ENCODE measurements at regions of chr7 and their contacts with region 1.

Region 1: GRCh38 chr7:134432296-134433152 is 26.4 kb downstream of the AKR1B1 start:
- DNase-seq: peak; percentile 86 to 88
- H3K4me3 ChIP-seq: peak overlapping the region; percentile 34 to 50
- H3K27ac ChIP-seq: peak overlapping the region; percentile 62 to 67
- H3K4me1 ChIP-seq: peaks cover 0 to 13% (median 2%) of the 10 kb centered on the region in 4 donors
- H3K27me3 ChIP-seq: no peaks in the 10 kb centered on the region
- CTCF ChIP-seq: peak; percentile 68 to 93

Region 2: GRCh38 chr7:134502463-134503371 is 70.2 kb after region 1 on chr7:
- intact Hi-C with region 1: no loop called
- DNase-seq: peak; percentile 74 to 84
- H3K4me3 ChIP-seq: no peak overlapping the region
- H3K27ac ChIP-seq: no peak overlapping the region
- H3K4me1 ChIP-seq: peaks cover 0 to 4% (median 0%) of the 10 kb centered on the region in 4 donors
- H3K27me3 ChIP-seq: no peaks in the 10 kb centered on the region
- CTCF ChIP-seq: no peak

Region 3: GRCh38 chr7:134527979-134528371 is 95.5 kb after region 1 on chr7:
- intact Hi-C with region 1: no loop called
- DNase-seq: peak; percentile 67 to 74
- H3K4me3 ChIP-seq: no peak overlapping the region
- H3K27ac ChIP-seq: no peak overlapping the region
- H3K4me1 ChIP-seq: peaks cover 0 to 9% (median 3%) of the 10 kb centered on the region in 4 donors
- H3K27me3 ChIP-seq: peaks cover 0 to 7% of the 10 kb centered on the region in 2 donors
- CTCF ChIP-seq: no peak

Region 4: DNA sequence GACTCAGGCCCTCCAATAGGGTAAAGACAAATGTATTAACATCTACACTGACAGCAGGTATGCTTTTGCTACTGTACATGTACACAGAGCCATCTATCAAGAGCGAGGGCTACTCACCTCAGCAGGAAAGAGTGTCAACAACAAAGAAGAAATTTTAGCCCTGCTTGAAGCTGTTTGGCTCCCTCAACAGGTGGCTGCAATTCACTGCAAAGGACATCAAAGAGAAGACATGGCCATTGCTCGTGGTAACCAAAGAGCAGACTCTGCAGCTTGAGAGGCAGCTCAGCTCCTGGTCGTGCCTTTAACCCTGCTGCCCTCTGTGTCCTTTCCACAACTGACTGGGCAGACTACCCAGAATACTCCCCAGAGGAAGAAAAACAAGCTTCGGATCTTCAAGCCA is 121.5 kb after region 1 on chr7:
- intact Hi-C with region 1: loop called (anchors 5 kb)
- DNase-seq: no peak
- H3K4me3 ChIP-seq: no peak overlapping the region
- H3K27ac ChIP-seq: no peak overlapping the region
- H3K4me1 ChIP-seq: no peaks in the 10 kb centered on the region
- H3K27me3 ChIP-seq: peaks cover 0 to 4% of the 10 kb centered on the region in 2 donors
- CTCF ChIP-seq: no peak

Measured in tibial artery (tissue), 4 donors.